ENCODE measurements at regions of chr6 and their contacts with region 1.

Region 1: GRCh38 chr6:26175428-26176181 is 88.4 kb downstream of the HFE start:
- DNase-seq: peak in 7 of 9 donors; percentile 57 to 75 (median 66)
- ATAC-seq: peak; percentile 32
- H3K4me3 ChIP-seq: no peak overlapping the region
- H3K4me3 Mint-ChIP-seq: peak overlapping the region in 7 of 10 donors; percentile 15 to 63 (median 43)
- H3K27ac ChIP-seq: no peak overlapping the region
- H3K27ac Mint-ChIP-seq: peak overlapping the region; percentile 32 to 89 (median 76)
- H3K4me1 ChIP-seq: peaks cover 16 to 19% of the 10 kb centered on the region in 2 donors
- H3K4me1 Mint-ChIP-seq: peaks cover 20 to 51% (median 39%) of the 10 kb centered on the region in 7 donors
- H3K27me3 ChIP-seq: no peaks in the 10 kb centered on the region
- H3K27me3 Mint-ChIP-seq: no peaks in the 10 kb centered on the region

Region 2: GRCh38 chr6:26031595-26032339 is 143.8 kb before region 1 on chr6:
- CTCF ChIA-PET with region 1: no interaction called
- POLR2A ChIA-PET with region 1: interaction called, 29 read pairs
- intact Hi-C with region 1: no loop called
- DNase-seq: peak; percentile 56 to 94 (median 90)
- ATAC-seq: peak; percentile 79
- H3K4me3 ChIP-seq: peak overlapping the region; percentile 70
- H3K4me3 Mint-ChIP-seq: peak overlapping the region; percentile 89 to 98 (median 96)
- H3K27ac ChIP-seq: peak overlapping the region; percentile 69
- H3K27ac Mint-ChIP-seq: peak overlapping the region; percentile 93 to 98 (median 96)
- H3K4me1 ChIP-seq: peaks cover 23 to 31% of the 10 kb centered on the region in 2 donors
- H3K4me1 Mint-ChIP-seq: peaks cover 14 to 69% (median 43%) of the 10 kb centered on the region in 7 donors
- H3K27me3 ChIP-seq: no peaks in the 10 kb centered on the region
- H3K27me3 Mint-ChIP-seq: peaks cover 0 to 7% (median 0%) of the 10 kb centered on the region in 5 donors

Region 3: GRCh38 chr6:26103770-26104456 is 71.7 kb before region 1 on chr6:
- CTCF ChIA-PET with region 1: no interaction called
- POLR2A ChIA-PET with region 1: interaction called, 19 read pairs
- intact Hi-C with region 1: no loop called
- DNase-seq: peak; percentile 83 to 96 (median 95)
- ATAC-seq: peak; percentile 94
- H3K4me3 ChIP-seq: peak overlapping the region; percentile 40
- H3K4me3 Mint-ChIP-seq: peak overlapping the region; percentile 81 to 97 (median 89)
- H3K27ac ChIP-seq: peak overlapping the region; percentile 75
- H3K27ac Mint-ChIP-seq: peak overlapping the region; percentile 96 to 100 (median 98)
- H3K4me1 ChIP-seq: peaks cover 4 to 12% of the 10 kb centered on the region in 2 donors
- H3K4me1 Mint-ChIP-seq: peaks cover 7 to 25% (median 22%) of the 10 kb centered on the region in 7 donors
- H3K27me3 ChIP-seq: no peaks in the 10 kb centered on the region
- H3K27me3 Mint-ChIP-seq: peaks cover 0 to 3% (median 0%) of the 10 kb centered on the region in 5 donors

Region 4: GRCh38 chr6:26223650-26224546 is 48.3 kb after region 1 on chr6:
- CTCF ChIA-PET with region 1: no interaction called
- POLR2A ChIA-PET with region 1: interaction called, 51 read pairs
- intact Hi-C with region 1: no loop called
- DNase-seq: peak in 7 of 9 donors; percentile 79 to 89 (median 84)
- ATAC-seq: peak; percentile 93
- H3K4me3 ChIP-seq: peak overlapping the region; percentile 77
- H3K4me3 Mint-ChIP-seq: no peak overlapping the region
- H3K27ac ChIP-seq: peak overlapping the region; percentile 77
- H3K27ac Mint-ChIP-seq: no peak overlapping the region
- H3K4me1 ChIP-seq: peaks cover 14 to 18% of the 10 kb centered on the region in 2 donors
- H3K4me1 Mint-ChIP-seq: peaks cover 10 to 25% (median 18%) of the 10 kb centered on the region in 7 donors
- H3K27me3 ChIP-seq: no peaks in the 10 kb centered on the region
- H3K27me3 Mint-ChIP-seq: no peaks in the 10 kb centered on the region

Region 5: DNA sequence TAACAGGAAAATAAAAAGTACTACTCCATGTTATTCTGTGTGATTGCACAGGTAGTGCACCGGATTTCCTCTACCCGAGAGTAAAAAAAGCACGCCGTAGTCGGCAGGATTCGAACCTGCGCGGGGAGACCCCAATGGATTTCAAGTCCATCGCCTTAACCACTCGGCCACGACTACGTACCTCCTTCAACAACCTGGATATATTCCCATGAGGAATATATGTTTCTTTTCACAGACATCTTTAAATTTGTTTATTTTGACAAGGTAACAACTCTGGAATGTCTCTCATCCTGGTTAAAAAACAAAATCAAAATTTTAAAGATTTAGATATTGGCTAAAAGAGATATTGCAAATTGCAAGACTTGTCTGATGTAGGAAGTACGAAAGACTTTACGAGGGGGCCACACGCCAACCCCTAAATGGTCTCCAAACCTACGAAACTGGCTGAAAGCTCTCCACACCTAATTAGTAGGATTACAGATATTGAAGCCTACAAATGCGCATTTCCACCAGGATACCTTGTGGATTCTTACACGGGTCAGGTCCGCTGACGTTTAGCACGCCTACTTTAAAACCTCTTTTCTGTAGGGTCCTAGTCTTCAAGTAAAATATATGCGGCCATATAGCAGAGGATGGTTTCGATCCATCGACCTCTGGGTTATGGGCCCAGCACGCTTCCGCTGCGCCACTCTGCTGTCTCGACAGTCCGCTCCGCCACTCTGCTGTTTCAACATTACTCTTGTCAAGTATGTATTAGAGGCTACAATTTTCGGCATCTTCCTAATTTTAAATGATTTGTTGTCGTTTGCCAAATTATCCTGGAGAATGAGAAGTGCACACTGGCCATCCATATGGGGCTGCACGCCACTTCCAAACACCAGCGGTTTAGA is 137.1 kb after region 1 on chr6:
- CTCF ChIA-PET with region 1: no interaction called
- POLR2A ChIA-PET with region 1: interaction called, 3 read pairs
- intact Hi-C with region 1: loop called in 1 of 2 experiments (anchors 5 kb)
- DNase-seq: peak; percentile 64 to 91 (median 86)
- ATAC-seq: peak; percentile 75
- H3K4me3 ChIP-seq: peak overlapping the region; percentile 81
- H3K4me3 Mint-ChIP-seq: peak overlapping the region; percentile 83 to 100 (median 96)
- H3K27ac ChIP-seq: peak overlapping the region; percentile 55
- H3K27ac Mint-ChIP-seq: peak overlapping the region; percentile 82 to 100 (median 96)
- H3K4me1 ChIP-seq: peaks cover 4 to 19% of the 10 kb centered on the region in 2 donors
- H3K4me1 Mint-ChIP-seq: peaks cover 5 to 51% (median 37%) of the 10 kb centered on the region in 7 donors
- H3K27me3 ChIP-seq: no peaks in the 10 kb centered on the region
- H3K27me3 Mint-ChIP-seq: peaks cover 0 to 8% (median 0%) of the 10 kb centered on the region in 5 donors

Region 6: GRCh38 chr6:26421259-26422144 is 245.9 kb after region 1 on chr6:
- CTCF ChIA-PET with region 1: no interaction called
- POLR2A ChIA-PET with region 1: no interaction called
- intact Hi-C with region 1: loop called in 1 of 2 experiments (anchors 2 kb)
- DNase-seq: peak; percentile 11 to 71 (median 62)
- ATAC-seq: peak; percentile 96
- H3K4me3 ChIP-seq: peak overlapping the region; percentile 79
- H3K4me3 Mint-ChIP-seq: no peak overlapping the region
- H3K27ac ChIP-seq: peak overlapping the region; percentile 71
- H3K27ac Mint-ChIP-seq: peak overlapping the region in 2 of 9 donors; percentile 43 to 79
- H3K4me1 ChIP-seq: peaks cover 5 to 9% of the 10 kb centered on the region in 2 donors
- H3K4me1 Mint-ChIP-seq: peaks cover 0 to 16% (median 3%) of the 10 kb centered on the region in 7 donors
- H3K27me3 ChIP-seq: no peaks in the 10 kb centered on the region
- H3K27me3 Mint-ChIP-seq: no peaks in the 10 kb centered on the region

Region 7: DNA sequence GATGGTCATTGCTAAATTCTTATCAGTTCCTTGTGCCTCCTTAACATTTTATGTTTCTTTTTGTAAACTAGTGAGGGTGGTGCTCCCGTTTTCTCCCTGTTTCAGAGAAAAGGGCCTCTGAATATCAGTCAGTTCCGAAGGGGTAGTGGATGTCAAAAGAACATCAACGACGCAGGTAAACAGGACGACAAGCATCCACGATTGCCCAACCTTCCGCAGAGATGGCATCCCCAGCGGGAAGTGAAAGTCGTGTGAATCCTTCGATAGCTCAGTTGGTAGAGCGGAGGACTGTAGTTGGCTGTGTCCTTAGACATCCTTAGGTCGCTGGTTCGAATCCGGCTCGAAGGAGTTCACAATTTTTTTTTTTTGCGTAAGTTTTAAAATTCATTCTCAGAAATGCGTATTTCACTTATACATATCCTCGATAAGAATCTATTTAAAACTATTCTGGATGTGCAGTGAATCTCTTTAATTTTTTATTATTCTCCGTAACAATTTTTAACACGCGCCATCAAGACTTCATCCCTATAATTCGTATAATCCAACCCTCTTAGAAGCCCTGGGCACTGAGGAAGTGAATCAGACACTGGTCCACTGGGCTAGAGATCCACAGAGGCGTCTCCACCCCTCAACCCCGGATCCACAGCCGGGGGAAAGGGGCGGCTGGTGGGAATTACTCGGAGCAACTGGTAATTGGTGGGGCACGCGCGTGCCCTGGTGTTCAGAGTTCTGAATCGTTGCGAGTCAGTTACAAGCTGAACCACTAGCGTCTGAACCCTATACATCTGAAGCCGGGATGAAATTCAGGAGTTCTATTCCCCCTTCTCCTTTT is 393.2 kb after region 1 on chr6:
- CTCF ChIA-PET with region 1: no interaction called
- POLR2A ChIA-PET with region 1: interaction called, 5 read pairs
- intact Hi-C with region 1: loop called (anchors 1 kb)
- DNase-seq: peak; percentile 96 to 99 (median 98)
- ATAC-seq: peak; percentile 84
- H3K4me3 ChIP-seq: peak overlapping the region; percentile 90
- H3K4me3 Mint-ChIP-seq: peak overlapping the region; percentile 90 to 100 (median 95)
- H3K27ac ChIP-seq: peak overlapping the region; percentile 74
- H3K27ac Mint-ChIP-seq: peak overlapping the region; percentile 96 to 100 (median 99)
- H3K4me1 ChIP-seq: peaks cover 0 to 3% of the 10 kb centered on the region in 2 donors
- H3K4me1 Mint-ChIP-seq: peaks cover 11 to 42% (median 26%) of the 10 kb centered on the region in 7 donors
- H3K27me3 ChIP-seq: no peaks in the 10 kb centered on the region
- H3K27me3 Mint-ChIP-seq: peaks cover 0 to 12% (median 0%) of the 10 kb centered on the region in 5 donors